ENCODE measurements at regions of chr4 and their contacts with region 1.

Region 1: DNA sequence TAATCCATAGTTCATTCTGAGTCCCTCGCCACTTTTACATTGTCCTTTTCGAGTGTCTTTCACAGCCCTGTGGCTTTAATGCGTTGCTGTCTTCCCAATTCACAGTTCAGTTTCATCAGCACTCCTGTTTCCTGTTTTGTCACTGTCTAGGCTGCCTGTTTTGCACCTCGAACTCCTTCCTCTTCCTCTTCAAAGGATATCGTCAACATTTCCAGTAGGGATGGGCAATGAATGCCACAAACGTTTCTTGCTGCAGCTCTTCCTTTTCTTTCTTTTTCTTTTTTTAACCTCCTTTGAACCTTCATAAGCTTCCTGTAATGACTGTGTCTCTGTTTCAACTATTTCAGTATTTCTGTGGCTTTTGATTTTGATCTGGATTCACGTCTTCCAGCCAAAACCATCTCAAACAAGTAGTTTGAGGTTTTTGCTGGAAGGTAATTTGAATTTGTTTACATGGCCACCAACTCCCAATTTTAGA is 105.4 kb downstream of the ANXA3 start:
- DNase-seq: no peak
- ATAC-seq: no peak
- H3K4me3 Mint-ChIP-seq: peak overlapping the region; percentile 72
- H3K27ac Mint-ChIP-seq: peak overlapping the region; percentile 85
- H3K4me1 Mint-ChIP-seq: peaks cover 51% of the 10 kb centered on the region
- H3K27me3 Mint-ChIP-seq: no peaks in the 10 kb centered on the region
- CTCF ChIP-seq: no peak

Region 2: GRCh38 chr4:78629991-78630541 is 26.9 kb before region 1 on chr4:
- CTCF ChIA-PET with region 1: no interaction called
- POLR2A ChIA-PET with region 1: interaction called, 18 read pairs
- intact Hi-C with region 1: loop called (anchors 2 kb)
- DNase-seq: no peak
- ATAC-seq: peak; percentile 13
- H3K4me3 Mint-ChIP-seq: peak overlapping the region; percentile 7
- H3K27ac Mint-ChIP-seq: peak overlapping the region; percentile 94
- H3K4me1 Mint-ChIP-seq: peaks cover 88% of the 10 kb centered on the region
- H3K27me3 Mint-ChIP-seq: no peaks in the 10 kb centered on the region
- CTCF ChIP-seq: no peak

Region 3: GRCh38 chr4:78984593-78984992 is 327.6 kb after region 1 on chr4:
- CTCF ChIA-PET with region 1: no interaction called
- POLR2A ChIA-PET with region 1: no interaction called
- intact Hi-C with region 1: no loop called
- DNase-seq: no peak
- ATAC-seq: no peak
- H3K4me3 Mint-ChIP-seq: no peak overlapping the region
- H3K27ac Mint-ChIP-seq: no peak overlapping the region
- H3K4me1 Mint-ChIP-seq: no peaks in the 10 kb centered on the region
- H3K27me3 Mint-ChIP-seq: peaks cover 19% of the 10 kb centered on the region
- CTCF ChIP-seq: no peak

Measured in activated B cell treated with CpG ODN at 0.5 μM for 24 hours (primary cell).